PC-3 (cell line): ENCODE measurements at regions of chr1 and their contacts with region 1.

Region 1: GRCh38 chr1:241605146-241605805 is 34.9 kb downstream of the CHML start:
- DNase-seq: peak; percentile 98
- ATAC-seq: peak; percentile 34
- H3K4me3 ChIP-seq: no peak overlapping the region
- H3K27ac ChIP-seq: peak overlapping the region; percentile 88
- H3K4me1 ChIP-seq: peaks cover 74% of the 10 kb centered on the region
- H3K27me3 ChIP-seq: no peaks in the 10 kb centered on the region
- CTCF ChIP-seq: peak; percentile 99

Region 2: GRCh38 chr1:241213139-241213538 is 392.1 kb before region 1 on chr1:
- CTCF ChIA-PET with region 1: no interaction called
- POLR2A ChIA-PET with region 1: no interaction called
- intact Hi-C with region 1: no loop called
- DNase-seq: peak; percentile 92
- ATAC-seq: peak; percentile 68
- H3K4me3 ChIP-seq: peak overlapping the region; percentile 5; the same call in 1 of the 2 replicates
- H3K27ac ChIP-seq: no peak overlapping the region
- H3K4me1 ChIP-seq: peaks cover 9% of the 10 kb centered on the region; the same call in 1 of the 2 replicates
- H3K27me3 ChIP-seq: peaks cover 41% of the 10 kb centered on the region
- CTCF ChIP-seq: no peak

Region 3: GRCh38 chr1:241592273-241592958 is 12.9 kb before region 1 on chr1:
- CTCF ChIA-PET with region 1: interaction called, 13 read pairs
- POLR2A ChIA-PET with region 1: interaction called, 6 read pairs
- intact Hi-C with region 1: loop called (anchors 1 kb)
- DNase-seq: peak; percentile 100
- ATAC-seq: peak; percentile 82
- H3K4me3 ChIP-seq: peak overlapping the region; percentile 20
- H3K27ac ChIP-seq: peak overlapping the region; percentile 89
- H3K4me1 ChIP-seq: peaks cover 43% of the 10 kb centered on the region
- H3K27me3 ChIP-seq: no peaks in the 10 kb centered on the region
- CTCF ChIP-seq: no peak